Lower lobe of right lung (tissue), 2 donors: ENCODE measurements at regions of chr15 and their contacts with region 1.

Region 1: GRCh38 chr15:55218056-55218455 is 21.3 kb upstream of the RSL24D1 start:
- DNase-seq: no peak
- ATAC-seq: no peak
- H3K4me3 ChIP-seq: no peak overlapping the region
- H3K27ac ChIP-seq: no peak overlapping the region
- H3K4me1 ChIP-seq: peaks cover 46% of the 10 kb centered on the region
- H3K27me3 ChIP-seq: no peaks in the 10 kb centered on the region
- CTCF ChIP-seq: no peak

Region 2: GRCh38 chr15:55279746-55280351 is 61.8 kb after region 1 on chr15:
- intact Hi-C with region 1: no loop called
- DNase-seq: no peak
- ATAC-seq: peak; percentile 42 to 64
- H3K4me3 ChIP-seq: no peak overlapping the region
- H3K27ac ChIP-seq: peak overlapping the region; percentile 28
- H3K4me1 ChIP-seq: peaks cover 75% of the 10 kb centered on the region
- H3K27me3 ChIP-seq: no peaks in the 10 kb centered on the region
- CTCF ChIP-seq: no peak

Region 3: GRCh38 chr15:55290528-55291057 is 72.5 kb after region 1 on chr15:
- intact Hi-C with region 1: loop called (anchors 5 kb)
- DNase-seq: peak; percentile 92
- ATAC-seq: peak; percentile 89 to 92
- H3K4me3 ChIP-seq: peak overlapping the region; percentile 80
- H3K27ac ChIP-seq: peak overlapping the region; percentile 96
- H3K4me1 ChIP-seq: peaks cover 27% of the 10 kb centered on the region
- H3K27me3 ChIP-seq: no peaks in the 10 kb centered on the region
- CTCF ChIP-seq: peak; percentile 97